Psoas muscle (tissue), 8 donors: ENCODE measurements at regions of chr4 and their contacts with region 1.

Region 1: GRCh38 chr4:163042306-163042705 is 124.4 kb downstream of the NAF1 start:
- DNase-seq: no peak
- ATAC-seq: no peak
- H3K4me3 ChIP-seq: no peak overlapping the region
- H3K27ac ChIP-seq: no peak overlapping the region
- H3K4me1 ChIP-seq: no peaks in the 10 kb centered on the region
- H3K27me3 ChIP-seq: no peaks in the 10 kb centered on the region
- CTCF ChIP-seq: no peak

Region 2: DNA sequence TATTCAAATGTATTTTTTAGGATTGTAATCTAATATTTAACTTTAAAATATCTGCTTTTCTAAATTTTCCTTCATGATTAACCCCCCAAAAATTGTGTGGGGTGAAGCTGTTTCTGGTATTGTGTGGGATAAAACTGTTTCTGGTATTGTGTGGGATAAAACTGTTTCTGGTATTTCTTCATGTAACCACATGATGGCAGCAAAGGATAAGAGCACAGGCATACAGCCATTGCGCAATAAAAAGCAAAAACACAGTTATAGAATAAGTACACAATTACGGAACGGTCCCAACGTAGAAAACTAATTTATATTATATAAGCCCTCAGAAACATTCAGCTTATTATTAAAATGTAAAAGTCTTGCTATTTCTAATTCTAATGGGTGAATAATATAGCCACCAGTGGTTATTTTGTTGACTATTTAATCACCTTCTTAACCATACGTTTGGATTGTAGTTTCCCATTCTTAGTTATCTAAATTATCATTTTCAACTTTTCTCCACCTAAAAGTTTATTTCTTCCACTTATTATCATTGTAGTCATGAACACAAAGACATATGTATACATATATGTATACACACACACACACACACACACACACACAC is 544.6 kb before region 1 on chr4:
- intact Hi-C with region 1: loop called in 1 of 2 experiments (anchors 10 kb)
- DNase-seq: no peak
- ATAC-seq: peak; percentile 67 to 80 (median 70)
- H3K4me3 ChIP-seq: peak overlapping the region; percentile 42
- H3K27ac ChIP-seq: no peak overlapping the region
- H3K4me1 ChIP-seq: no peaks in the 10 kb centered on the region
- H3K27me3 ChIP-seq: no peaks in the 10 kb centered on the region
- CTCF ChIP-seq: peak; percentile 85

Region 3: GRCh38 chr4:163356104-163356503 is 313.8 kb after region 1 on chr4:
- intact Hi-C with region 1: no loop called
- DNase-seq: no peak
- ATAC-seq: no peak
- H3K4me3 ChIP-seq: no peak overlapping the region
- H3K27ac ChIP-seq: no peak overlapping the region
- H3K4me1 ChIP-seq: no peaks in the 10 kb centered on the region
- H3K27me3 ChIP-seq: no peaks in the 10 kb centered on the region
- CTCF ChIP-seq: no peak